ENCODE measurements at regions of chr3 and their contacts with region 1.

Region 1: GRCh38 chr3:78754066-78754743 is 1013.6 kb downstream of the ROBO1 start:
- DNase-seq: no peak

Region 2: GRCh38 chr3:78785004-78785403 is 30.8 kb after region 1 on chr3:
- intact Hi-C with region 1: no loop called
- DNase-seq: no peak

Region 3: DNA sequence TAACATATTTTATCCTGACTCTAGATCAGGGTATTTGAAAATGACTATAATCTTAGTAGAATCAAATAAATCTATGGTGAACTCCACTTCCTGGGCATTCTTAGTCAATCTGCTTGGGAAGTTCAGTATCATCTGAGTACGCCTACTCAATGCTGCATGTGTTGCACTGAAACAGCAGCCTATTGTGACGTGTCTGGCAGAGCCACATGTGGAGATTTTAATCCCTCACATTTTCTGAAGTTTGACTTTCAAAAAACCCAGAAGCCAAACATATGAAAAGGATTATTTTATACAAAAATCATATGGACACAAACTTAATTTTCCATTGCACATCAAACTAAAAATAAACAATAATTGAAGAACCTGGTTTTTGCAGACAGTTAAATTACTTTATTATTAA is 215.3 kb after region 1 on chr3:
- intact Hi-C with region 1: loop called (anchors 5 kb)
- DNase-seq: peak in 5 of 10 donors; percentile 17 to 85 (median 44)